Natural killer cell (primary cell): ENCODE measurements at regions of chr19 and their contacts with region 1.

Region 1: DNA sequence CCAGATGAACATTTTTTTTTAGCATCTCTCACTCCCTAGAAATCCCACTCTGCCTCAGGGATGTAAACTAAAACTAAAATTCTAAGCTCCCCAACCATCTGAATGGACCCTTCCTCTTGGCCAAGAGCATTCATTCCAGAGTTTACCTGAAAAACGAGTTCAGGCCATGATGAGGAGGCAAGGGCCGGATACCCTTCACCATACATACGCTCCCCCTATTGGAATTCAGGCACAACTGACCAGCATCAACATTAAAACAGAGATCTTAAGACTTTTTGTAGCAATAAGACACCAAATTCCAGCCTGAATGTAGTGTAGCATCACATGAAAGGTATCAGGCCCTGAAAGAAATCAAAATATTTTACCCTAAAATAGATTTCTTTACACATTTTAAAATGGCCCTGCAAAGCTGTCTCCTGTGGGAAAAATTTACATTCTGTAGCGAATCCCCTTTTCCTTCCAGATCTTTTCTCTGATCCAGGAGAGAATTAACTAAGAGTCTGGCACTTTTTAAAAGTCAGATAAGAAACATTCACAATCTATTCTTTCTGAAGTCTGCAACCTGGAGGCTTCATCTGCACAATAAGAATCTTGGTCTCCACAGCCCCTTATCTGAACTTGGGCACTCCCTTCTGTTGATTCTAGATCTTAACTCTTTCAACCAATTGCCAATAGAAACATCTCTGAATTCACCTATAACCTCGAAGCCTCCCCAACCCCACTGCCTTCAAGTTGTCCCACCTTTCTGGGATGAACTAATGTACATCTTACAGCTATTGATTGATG is 888.5 kb downstream of the UQCRFS1 start:
- DNase-seq: no peak
- ATAC-seq: no peak
- H3K4me3 ChIP-seq: no peak overlapping the region
- H3K4me3 Mint-ChIP-seq: no peak overlapping the region
- H3K27ac ChIP-seq: no peak overlapping the region
- H3K27ac Mint-ChIP-seq: no peak overlapping the region
- H3K4me1 ChIP-seq: peaks cover 3% of the 10 kb centered on the region
- H3K4me1 Mint-ChIP-seq: peaks cover 0 to 7% of the 10 kb centered on the region in 2 donors
- H3K27me3 ChIP-seq: no peaks in the 10 kb centered on the region
- H3K27me3 Mint-ChIP-seq: peaks cover 0 to 2% of the 10 kb centered on the region in 2 donors
- CTCF ChIP-seq: no peak

Region 2: DNA sequence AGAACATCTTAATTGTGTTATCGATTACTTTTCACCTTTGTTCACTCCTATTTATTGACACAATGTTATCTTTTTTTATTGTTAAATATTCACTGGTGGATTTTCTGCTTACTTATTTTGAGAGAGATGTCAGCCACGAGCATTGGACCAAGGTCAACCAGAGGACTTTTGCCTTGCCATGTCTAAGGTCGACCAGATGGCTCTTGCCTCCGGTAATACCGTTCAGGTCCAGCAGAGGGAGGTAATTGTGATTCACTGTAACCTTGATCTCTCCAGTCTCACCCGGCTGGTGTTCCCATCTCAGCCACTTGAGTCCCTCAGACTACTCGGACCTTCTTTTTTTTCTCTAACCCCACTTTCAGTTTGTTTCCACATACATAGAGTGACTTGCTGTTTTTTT is 549.6 kb before region 1 on chr19:
- intact Hi-C with region 1: loop called (anchors 10 kb)
- DNase-seq: peak in 1 of 2 donors; percentile 11
- ATAC-seq: no peak
- H3K4me3 ChIP-seq: no peak overlapping the region
- H3K4me3 Mint-ChIP-seq: no peak overlapping the region
- H3K27ac ChIP-seq: no peak overlapping the region
- H3K27ac Mint-ChIP-seq: no peak overlapping the region
- H3K4me1 ChIP-seq: no peaks in the 10 kb centered on the region
- H3K4me1 Mint-ChIP-seq: no peaks in the 10 kb centered on the region
- H3K27me3 ChIP-seq: no peaks in the 10 kb centered on the region
- H3K27me3 Mint-ChIP-seq: no peaks in the 10 kb centered on the region
- CTCF ChIP-seq: peak; percentile 19

Region 3: GRCh38 chr19:27966390-27966816 is 358.1 kb before region 1 on chr19:
- intact Hi-C with region 1: loop called (anchors 2 kb)
- DNase-seq: peak in 1 of 2 donors; percentile 11
- ATAC-seq: no peak
- H3K4me3 ChIP-seq: no peak overlapping the region
- H3K4me3 Mint-ChIP-seq: no peak overlapping the region
- H3K27ac ChIP-seq: no peak overlapping the region
- H3K27ac Mint-ChIP-seq: no peak overlapping the region
- H3K4me1 ChIP-seq: no peaks in the 10 kb centered on the region
- H3K4me1 Mint-ChIP-seq: no peaks in the 10 kb centered on the region
- H3K27me3 ChIP-seq: no peaks in the 10 kb centered on the region
- H3K27me3 Mint-ChIP-seq: peaks cover 3 to 13% of the 10 kb centered on the region in 2 donors
- CTCF ChIP-seq: peak; percentile 61

Region 4: DNA sequence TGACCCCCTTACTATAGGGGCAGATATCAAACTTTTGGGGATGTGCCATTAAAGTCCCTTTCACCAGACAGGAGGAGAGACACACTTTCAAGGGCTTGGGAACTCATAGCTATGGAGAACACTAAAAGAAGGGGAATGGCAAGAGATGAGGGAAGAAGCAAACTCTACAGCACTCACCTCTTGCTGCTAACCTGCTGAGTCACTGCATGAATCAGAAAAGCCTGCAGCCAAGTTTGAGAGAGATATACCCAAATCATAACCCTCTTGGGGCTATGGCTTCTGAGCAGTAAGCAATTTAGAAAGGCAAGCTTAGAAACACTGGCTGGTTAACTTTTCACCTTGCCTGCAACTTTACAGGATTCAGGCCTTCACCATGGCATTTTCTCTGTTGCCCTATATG is 139.5 kb before region 1 on chr19:
- intact Hi-C with region 1: no loop called
- DNase-seq: no peak
- ATAC-seq: no peak
- H3K4me3 ChIP-seq: no peak overlapping the region
- H3K4me3 Mint-ChIP-seq: no peak overlapping the region
- H3K27ac ChIP-seq: no peak overlapping the region
- H3K27ac Mint-ChIP-seq: no peak overlapping the region
- H3K4me1 ChIP-seq: no peaks in the 10 kb centered on the region
- H3K4me1 Mint-ChIP-seq: no peaks in the 10 kb centered on the region
- H3K27me3 ChIP-seq: no peaks in the 10 kb centered on the region
- H3K27me3 Mint-ChIP-seq: no peaks in the 10 kb centered on the region
- CTCF ChIP-seq: no peak

Region 5: GRCh38 chr19:28242297-28242927 is 82.1 kb before region 1 on chr19:
- intact Hi-C with region 1: loop called (anchors 1 kb)
- DNase-seq: peak in 1 of 2 donors; percentile 45
- ATAC-seq: peak in 2 of 3 donors; percentile 36 to 74
- H3K4me3 ChIP-seq: no peak overlapping the region
- H3K4me3 Mint-ChIP-seq: no peak overlapping the region
- H3K27ac ChIP-seq: no peak overlapping the region
- H3K27ac Mint-ChIP-seq: no peak overlapping the region
- H3K4me1 ChIP-seq: no peaks in the 10 kb centered on the region
- H3K4me1 Mint-ChIP-seq: no peaks in the 10 kb centered on the region
- H3K27me3 ChIP-seq: no peaks in the 10 kb centered on the region
- H3K27me3 Mint-ChIP-seq: peaks cover 12 to 13% of the 10 kb centered on the region in 2 donors
- CTCF ChIP-seq: peak; percentile 73